ENCODE measurements at regions of chr3 and their contacts with region 1.

Region 1: GRCh38 chr3:117019082-117019713 is 309.6 kb downstream of the TUSC7 start:
- DNase-seq: peak; percentile 64 to 90
- H3K4me3 ChIP-seq: peak overlapping the region in 2 of 4 donors; percentile 14 to 23
- H3K27ac ChIP-seq: no peak overlapping the region
- H3K4me1 ChIP-seq: peaks cover 0 to 8% (median 3%) of the 10 kb centered on the region in 4 donors
- H3K27me3 ChIP-seq: no peaks in the 10 kb centered on the region
- CTCF ChIP-seq: peak in 5 of 7 experiments; percentile 61 to 85 (median 71)
- EP300 ChIP-seq: no peak
- POLR2A ChIP-seq: no peak

Region 2: DNA sequence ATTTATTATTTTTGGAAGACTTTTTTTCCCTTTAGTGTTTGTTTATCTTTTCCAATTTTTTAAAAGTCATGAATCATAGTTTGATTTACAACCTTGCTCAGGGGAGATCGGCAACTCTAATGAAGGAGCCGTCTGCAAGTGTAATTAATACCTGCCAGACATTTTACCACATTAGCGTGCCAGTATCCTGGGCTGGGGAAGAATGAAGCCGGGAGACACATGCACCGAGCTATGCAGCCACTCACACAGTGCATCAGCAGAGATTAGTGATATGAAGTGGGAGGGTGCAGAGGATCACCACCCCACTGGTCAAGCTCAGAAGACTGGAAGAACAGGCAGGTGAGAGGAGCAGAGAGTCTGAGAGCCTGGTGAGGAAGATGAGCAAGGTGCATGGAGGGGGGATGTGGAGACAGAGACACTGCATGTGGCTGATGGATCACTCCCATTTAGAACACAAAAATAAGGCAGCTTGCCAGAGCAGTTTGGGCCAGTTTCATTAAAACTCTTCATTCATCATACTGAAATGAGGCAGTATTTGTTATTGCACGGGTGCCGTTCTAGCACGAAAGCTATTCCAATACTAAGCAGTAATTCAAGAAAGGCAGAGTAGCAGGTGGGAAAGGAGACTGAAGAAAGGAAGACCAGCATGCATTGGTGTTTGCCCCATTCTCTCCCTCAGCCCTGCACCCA is 512.0 kb after region 1 on chr3:
- intact Hi-C with region 1: loop called (anchors 10 kb)
- DNase-seq: no peak
- H3K4me3 ChIP-seq: no peak overlapping the region
- H3K27ac ChIP-seq: no peak overlapping the region
- H3K4me1 ChIP-seq: no peaks in the 10 kb centered on the region
- H3K27me3 ChIP-seq: no peaks in the 10 kb centered on the region
- CTCF ChIP-seq: no peak
- EP300 ChIP-seq: no peak
- POLR2A ChIP-seq: no peak

Measured in stomach (tissue), 19 donors.